Natural killer cell (primary cell): ENCODE measurements at regions of chr3 and their contacts with region 1.

Region 1: GRCh38 chr3:38164966-38165680 is at the start of gene OXSR1:
- DNase-seq: peak; percentile 97 to 100
- ATAC-seq: peak; percentile 86 to 96 (median 87)
- H3K4me3 ChIP-seq: peak within 1 kb of the TSS; percentile 94
- H3K4me3 Mint-ChIP-seq: peak within 1 kb of the TSS; percentile 95
- H3K27ac ChIP-seq: peak within 1 kb of the TSS; percentile 100
- H3K27ac Mint-ChIP-seq: peak within 1 kb of the TSS; percentile 99 to 100
- H3K4me1 ChIP-seq: peaks cover 17% of the 10 kb centered on the region
- H3K4me1 Mint-ChIP-seq: peaks cover 31 to 53% of the 10 kb centered on the region in 2 donors
- H3K27me3 ChIP-seq: no peaks in the 10 kb centered on the region
- H3K27me3 Mint-ChIP-seq: no peaks in the 10 kb centered on the region
- CTCF ChIP-seq: no peak
- total RNA-seq, gene OXSR1: 37.2 to 46.1 (median 44.0) TPM

Region 2: DNA sequence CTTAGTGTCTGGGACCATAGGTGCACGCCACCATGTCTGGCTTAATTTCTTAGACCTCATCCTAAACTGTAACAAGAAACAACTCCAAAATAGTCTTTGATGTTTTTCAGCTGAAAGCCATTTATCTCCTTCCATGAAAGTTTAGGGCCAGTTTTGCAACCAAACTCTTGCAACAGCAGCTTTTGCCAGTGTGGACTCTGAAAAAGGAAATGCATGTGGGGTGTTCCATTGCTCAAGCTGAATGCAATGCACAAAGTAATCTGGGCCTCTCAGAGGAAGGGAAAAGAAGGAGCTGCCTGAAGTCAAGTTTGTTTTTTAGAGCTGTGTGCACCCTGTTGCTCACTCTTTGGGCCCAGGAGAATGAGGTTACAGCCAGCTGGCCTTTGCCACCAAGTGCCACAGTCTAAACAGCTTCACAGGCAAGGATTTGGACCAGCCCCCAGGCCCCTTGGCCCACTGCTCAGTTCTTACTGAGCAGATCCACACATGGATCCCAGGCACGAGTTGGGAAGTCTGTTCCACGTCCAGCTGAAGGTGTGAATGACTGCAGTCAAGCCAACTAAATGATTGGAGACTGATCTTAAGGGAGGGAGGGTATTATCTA is 778.4 kb before region 1 on chr3:
- intact Hi-C with region 1: no loop called
- DNase-seq: no peak
- ATAC-seq: no peak
- H3K4me3 ChIP-seq: no peak overlapping the region
- H3K4me3 Mint-ChIP-seq: no peak overlapping the region
- H3K27ac ChIP-seq: no peak overlapping the region
- H3K27ac Mint-ChIP-seq: no peak overlapping the region
- H3K4me1 ChIP-seq: no peaks in the 10 kb centered on the region
- H3K4me1 Mint-ChIP-seq: peaks cover 0 to 19% of the 10 kb centered on the region in 2 donors
- H3K27me3 ChIP-seq: no peaks in the 10 kb centered on the region
- H3K27me3 Mint-ChIP-seq: no peaks in the 10 kb centered on the region
- CTCF ChIP-seq: no peak

Region 3: DNA sequence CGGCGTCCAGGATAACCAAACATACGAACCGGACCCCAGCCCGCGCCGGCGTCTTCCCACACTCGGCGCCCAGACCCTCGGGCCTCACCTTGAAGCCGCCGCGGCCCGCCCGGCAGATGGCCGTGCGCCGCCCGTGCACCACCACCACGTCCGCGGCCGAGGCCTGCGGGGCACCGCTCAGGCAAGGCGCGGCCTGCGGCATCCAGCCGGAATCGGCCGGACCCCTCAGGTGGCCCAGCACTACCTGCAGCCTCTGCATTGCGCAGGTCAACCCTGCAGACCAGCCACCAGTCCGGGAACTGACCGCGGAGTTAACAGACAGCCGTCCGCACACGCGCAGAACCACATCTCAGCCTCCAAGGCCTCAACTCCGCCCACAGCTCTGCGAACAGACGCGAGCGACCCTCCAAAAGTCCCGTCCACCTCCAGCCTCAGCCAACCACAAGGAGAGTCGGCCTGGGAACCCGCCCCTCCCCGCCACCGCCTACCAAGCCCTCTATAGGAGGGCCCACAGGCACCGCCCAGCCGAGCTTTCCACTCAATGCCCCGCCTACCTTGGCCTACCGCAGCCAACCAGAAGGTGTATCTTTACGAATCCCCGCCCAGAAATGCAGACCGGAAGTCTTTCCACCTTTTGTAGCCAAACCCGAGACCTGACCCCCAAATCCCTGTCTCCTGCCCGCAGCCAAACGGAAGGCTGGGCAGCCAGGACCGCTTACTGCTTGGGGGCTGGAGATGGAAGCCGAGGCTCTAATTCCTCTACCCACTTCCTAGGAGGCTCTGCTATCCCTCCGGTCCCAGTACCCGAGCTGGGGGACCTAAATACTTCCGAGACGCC is 28.1 kb before region 1 on chr3 and contains the start of gene ACAA1:
- intact Hi-C with region 1: loop called (anchors 1 kb)
- DNase-seq: peak; percentile 94 to 98
- ATAC-seq: peak; percentile 89 to 96 (median 91)
- H3K4me3 ChIP-seq: peak within 1 kb of the TSS; percentile 95
- H3K4me3 Mint-ChIP-seq: peak within 1 kb of the TSS; percentile 99
- H3K27ac ChIP-seq: peak within 1 kb of the TSS; percentile 95
- H3K27ac Mint-ChIP-seq: peak within 1 kb of the TSS; percentile 95
- H3K4me1 ChIP-seq: peaks cover 55% of the 10 kb centered on the region
- H3K4me1 Mint-ChIP-seq: peaks cover 68 to 70% of the 10 kb centered on the region in 2 donors
- H3K27me3 ChIP-seq: no peaks in the 10 kb centered on the region
- H3K27me3 Mint-ChIP-seq: no peaks in the 10 kb centered on the region
- CTCF ChIP-seq: no peak
- total RNA-seq, gene ACAA1: 79.4 to 101 (median 93.9) TPM

Region 4: GRCh38 chr3:38235466-38235865 is 70.3 kb after region 1 on chr3:
- intact Hi-C with region 1: no loop called
- DNase-seq: no peak
- ATAC-seq: no peak
- H3K4me3 ChIP-seq: no peak overlapping the region
- H3K4me3 Mint-ChIP-seq: no peak overlapping the region
- H3K27ac ChIP-seq: no peak overlapping the region
- H3K27ac Mint-ChIP-seq: peak overlapping the region in 1 of 2 donors; percentile 8
- H3K4me1 ChIP-seq: no peaks in the 10 kb centered on the region
- H3K4me1 Mint-ChIP-seq: peaks cover 9 to 16% of the 10 kb centered on the region in 2 donors
- H3K27me3 ChIP-seq: no peaks in the 10 kb centered on the region
- H3K27me3 Mint-ChIP-seq: no peaks in the 10 kb centered on the region
- CTCF ChIP-seq: no peak

Region 5: GRCh38 chr3:38496131-38496910 is 331.2 kb after region 1 on chr3 and contains the start of gene EXOG:
- intact Hi-C with region 1: no loop called
- DNase-seq: peak; percentile 87 to 97
- ATAC-seq: peak; percentile 96 to 97 (median 97)
- H3K4me3 ChIP-seq: peak within 1 kb of the TSS; percentile 74
- H3K4me3 Mint-ChIP-seq: peak within 1 kb of the TSS; percentile 96
- H3K27ac ChIP-seq: peak within 1 kb of the TSS; percentile 58
- H3K27ac Mint-ChIP-seq: peak within 1 kb of the TSS; percentile 84 to 88
- H3K4me1 ChIP-seq: peaks cover 7% of the 10 kb centered on the region
- H3K4me1 Mint-ChIP-seq: peaks cover 21 to 25% of the 10 kb centered on the region in 2 donors
- H3K27me3 ChIP-seq: no peaks in the 10 kb centered on the region
- H3K27me3 Mint-ChIP-seq: no peaks in the 10 kb centered on the region
- CTCF ChIP-seq: peak; percentile 91
- total RNA-seq, gene EXOG: 27.3 to 34.5 (median 30.5) TPM